ENCODE measurements at regions of chr15 and their contacts with region 1.

Region 1: GRCh38 chr15:71800835-71801745 is 9.3 kb upstream of the NR2E3 start:
- DNase-seq: peak; percentile 59
- H3K4me3 ChIP-seq: no peak overlapping the region
- H3K27ac ChIP-seq: no peak overlapping the region
- H3K4me1 ChIP-seq: no peaks in the 10 kb centered on the region
- H3K27me3 ChIP-seq: no peaks in the 10 kb centered on the region
- CTCF ChIP-seq: peak; percentile 70

Region 2: GRCh38 chr15:71651750-71652186 is 149.3 kb before region 1 on chr15:
- intact Hi-C with region 1: no loop called
- DNase-seq: peak; percentile 37
- H3K4me3 ChIP-seq: no peak overlapping the region
- H3K27ac ChIP-seq: no peak overlapping the region
- H3K4me1 ChIP-seq: no peaks in the 10 kb centered on the region
- H3K27me3 ChIP-seq: no peaks in the 10 kb centered on the region
- CTCF ChIP-seq: no peak

Region 3: DNA sequence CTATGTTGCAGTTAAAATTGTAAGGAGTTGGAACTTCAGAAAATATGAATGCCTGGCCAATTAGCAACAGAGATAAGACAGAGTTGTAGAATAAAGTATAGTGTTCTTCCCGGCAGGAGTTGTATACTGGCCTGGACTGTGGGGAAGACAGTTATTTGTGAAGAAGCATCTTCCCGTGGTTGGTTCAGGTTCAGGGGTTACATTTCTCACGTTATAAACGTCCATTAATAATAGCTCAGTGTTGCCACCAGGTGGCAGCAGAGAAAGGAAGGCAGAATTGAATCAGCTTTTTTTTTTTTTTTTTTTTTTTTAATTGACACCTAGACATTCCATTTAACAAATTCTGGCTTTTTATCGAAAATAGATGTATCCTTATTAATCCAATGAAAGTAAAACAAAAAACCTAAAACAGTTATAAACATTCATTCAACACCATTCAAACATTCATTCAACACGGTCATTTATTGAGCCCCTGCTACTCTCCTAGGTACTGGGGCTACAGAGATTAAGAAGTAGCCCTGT is 57.2 kb before region 1 on chr15:
- intact Hi-C with region 1: loop called (anchors 2 kb)
- DNase-seq: peak; percentile 73
- H3K4me3 ChIP-seq: no peak overlapping the region
- H3K27ac ChIP-seq: no peak overlapping the region
- H3K4me1 ChIP-seq: no peaks in the 10 kb centered on the region
- H3K27me3 ChIP-seq: no peaks in the 10 kb centered on the region
- CTCF ChIP-seq: peak; percentile 71